AG04449 (cell line): ENCODE measurements at regions of chr1 and their contacts with region 1.

Region 1: GRCh38 chr1:87328272-87329050 is at the start of gene LMO4:
- DNase-seq: peak; percentile 89
- H3K4me3 ChIP-seq: peak within 1 kb of the TSS; percentile 71
- CTCF ChIP-seq: no peak

Region 2: GRCh38 chr1:86389307-86389706 is 939.2 kb before region 1 on chr1:
- CTCF ChIA-PET with region 1: no interaction called
- POLR2A ChIA-PET with region 1: no interaction called
- DNase-seq: no peak
- H3K4me3 ChIP-seq: no peak overlapping the region
- CTCF ChIP-seq: no peak

Region 3: GRCh38 chr1:86993269-86993985 is 335.0 kb before region 1 on chr1:
- CTCF ChIA-PET with region 1: no interaction called
- POLR2A ChIA-PET with region 1: no interaction called
- DNase-seq: no peak
- H3K4me3 ChIP-seq: no peak overlapping the region
- CTCF ChIP-seq: no peak

Region 4: DNA sequence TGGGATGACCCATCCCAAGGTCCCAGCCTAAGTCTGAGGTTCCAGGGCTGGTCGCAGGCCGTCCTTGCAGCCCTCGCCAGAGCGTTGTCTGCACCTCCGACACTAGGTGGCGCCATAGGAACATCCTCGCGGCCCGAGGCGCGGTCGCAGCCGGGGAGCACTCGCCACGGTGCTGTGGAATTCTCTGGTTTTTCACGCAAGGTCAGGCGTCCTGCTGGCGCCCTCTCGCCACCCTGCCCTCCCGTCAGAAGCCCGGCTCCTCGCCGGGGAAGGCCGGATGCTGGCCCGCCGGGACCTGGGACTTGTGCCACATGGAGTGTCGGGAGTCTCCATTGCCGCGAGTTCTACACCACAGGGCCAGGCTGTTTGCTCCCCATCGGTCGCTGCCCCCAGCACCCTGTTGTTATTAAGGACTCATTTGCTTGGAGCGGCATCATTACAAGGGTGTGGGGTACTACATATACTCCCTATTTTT is 196.6 kb before region 1 on chr1:
- CTCF ChIA-PET with region 1: interaction called, 15 read pairs
- POLR2A ChIA-PET with region 1: interaction called, 3 read pairs
- DNase-seq: no peak
- H3K4me3 ChIP-seq: peak overlapping the region; percentile 50
- CTCF ChIP-seq: peak; percentile 97

Region 5: GRCh38 chr1:87194266-87194774 is 134.1 kb before region 1 on chr1:
- CTCF ChIA-PET with region 1: no interaction called
- POLR2A ChIA-PET with region 1: no interaction called
- DNase-seq: no peak
- H3K4me3 ChIP-seq: no peak overlapping the region
- CTCF ChIP-seq: no peak

Region 6: GRCh38 chr1:87305762-87306161 is 22.7 kb before region 1 on chr1:
- CTCF ChIA-PET with region 1: interaction called, 31 read pairs
- POLR2A ChIA-PET with region 1: no interaction called
- DNase-seq: no peak
- H3K4me3 ChIP-seq: no peak overlapping the region
- CTCF ChIP-seq: no peak

Region 7: GRCh38 chr1:87318056-87318650 is 10.3 kb before region 1 on chr1:
- CTCF ChIA-PET with region 1: interaction called, 35 read pairs
- POLR2A ChIA-PET with region 1: interaction called, 5 read pairs
- DNase-seq: no peak
- H3K4me3 ChIP-seq: no peak overlapping the region
- CTCF ChIP-seq: no peak

Region 8: DNA sequence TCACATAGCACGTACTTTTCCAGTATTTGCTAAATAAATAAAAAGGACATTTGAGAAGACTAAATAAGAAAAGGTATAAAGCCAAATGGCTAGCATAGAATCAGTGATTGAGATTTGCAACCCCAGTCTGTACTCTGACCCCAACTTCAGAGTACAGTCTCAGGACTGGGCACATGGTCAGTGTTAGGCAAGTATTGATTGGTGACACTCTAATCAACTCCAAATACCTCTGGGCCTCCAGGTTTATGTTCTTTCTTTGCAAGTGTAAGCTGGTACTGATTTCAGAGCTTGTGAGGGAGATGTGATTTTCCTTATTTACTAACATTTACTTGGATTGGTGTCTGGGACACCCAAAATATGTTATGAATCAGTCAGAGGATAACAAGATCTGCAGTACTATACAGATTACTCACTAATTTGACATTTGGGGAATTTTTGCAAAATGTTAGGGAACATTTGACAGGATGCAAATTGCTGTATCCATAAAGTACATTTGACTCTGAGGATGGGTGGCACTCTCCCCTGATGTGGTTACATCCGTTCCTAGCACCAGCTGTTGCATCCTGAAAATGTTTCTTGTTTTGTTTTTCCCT is 34.5 kb after region 1 on chr1:
- CTCF ChIA-PET with region 1: no interaction called
- POLR2A ChIA-PET with region 1: no interaction called
- DNase-seq: no peak
- H3K4me3 ChIP-seq: no peak overlapping the region
- CTCF ChIP-seq: no peak